BJ (cell line): ENCODE measurements at regions of chr15 and their contacts with region 1.

Region 1: GRCh38 chr15:70488002-70488605 is 275.3 kb downstream of the UACA start:
- DNase-seq: no peak
- H3K4me3 ChIP-seq: no peak overlapping the region
- H3K27me3 ChIP-seq: peaks cover 19% of the 10 kb centered on the region
- CTCF ChIP-seq: peak; percentile 97

Region 2: DNA sequence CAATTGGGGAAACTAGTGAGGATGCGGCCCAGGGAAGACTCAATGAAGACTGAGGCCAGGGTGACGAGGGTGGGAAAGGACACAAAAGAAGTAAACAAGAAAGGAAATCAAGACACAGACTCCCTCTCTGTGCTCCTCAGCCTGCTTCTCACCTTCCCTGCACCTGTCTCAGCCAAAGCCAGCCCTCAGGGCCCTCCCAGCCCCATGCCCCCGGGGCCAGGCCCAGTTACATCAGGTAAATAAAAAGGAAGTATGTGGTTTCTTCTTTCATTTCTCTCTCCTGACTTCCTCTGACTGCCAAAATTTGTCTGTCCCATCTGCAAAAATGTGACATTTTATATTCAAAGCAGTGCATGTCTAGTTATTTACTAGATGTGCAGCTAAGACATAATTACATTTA is 52.7 kb before region 1 on chr15:
- CTCF ChIA-PET with region 1: no interaction called
- POLR2A ChIA-PET with region 1: no interaction called
- DNase-seq: no peak
- H3K4me3 ChIP-seq: no peak overlapping the region
- H3K27me3 ChIP-seq: peaks cover 16% of the 10 kb centered on the region
- CTCF ChIP-seq: no peak

Region 3: GRCh38 chr15:70504299-70504951 is 16.3 kb after region 1 on chr15:
- CTCF ChIA-PET with region 1: interaction called, 17 read pairs
- POLR2A ChIA-PET with region 1: no interaction called
- DNase-seq: no peak
- H3K4me3 ChIP-seq: no peak overlapping the region
- H3K27me3 ChIP-seq: peaks cover 3% of the 10 kb centered on the region
- CTCF ChIP-seq: no peak